ENCODE measurements at regions of chr16 and their contacts with region 1.

Region 1: DNA sequence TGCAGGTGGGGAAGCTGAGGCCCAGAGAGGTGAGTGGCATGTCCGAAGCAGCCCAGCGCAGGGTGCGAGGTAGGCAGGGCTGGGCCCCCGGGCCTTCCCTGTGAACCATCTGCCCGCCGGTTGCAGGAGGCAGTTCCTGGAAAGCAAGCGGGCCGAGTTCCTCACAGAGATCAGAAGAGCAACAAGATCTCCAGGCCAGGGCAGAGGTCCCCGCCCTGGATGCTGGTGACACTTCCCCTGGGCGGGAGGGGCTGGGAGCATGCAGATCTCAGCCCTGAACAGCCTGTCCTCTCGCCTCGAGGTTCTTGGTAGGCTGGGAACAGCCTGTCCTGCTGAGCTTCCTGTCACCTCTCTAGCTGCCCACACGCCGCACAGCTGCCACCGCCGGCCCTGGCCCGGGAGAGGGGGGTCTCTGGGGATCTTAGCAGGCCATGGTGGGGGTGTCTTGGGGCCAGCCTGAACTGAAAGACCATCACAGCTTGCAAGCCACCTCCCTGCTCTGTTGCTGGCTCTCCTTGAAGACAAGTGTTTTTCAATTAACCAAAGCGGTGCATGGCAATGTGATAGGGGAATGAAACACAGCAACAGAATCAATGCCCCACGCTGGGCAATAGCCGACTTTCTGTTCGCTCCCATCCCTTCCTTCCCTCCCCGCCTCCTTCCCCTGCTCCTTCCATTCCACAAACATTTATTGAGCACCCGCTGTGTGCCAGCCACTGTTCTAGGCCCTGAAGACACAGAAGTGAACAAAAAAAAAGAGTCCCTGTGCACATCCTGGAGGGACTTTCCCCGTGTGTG is 31.7 kb downstream of the SOCS1 start:
- DNase-seq: peak; percentile 92
- H3K4me3 Mint-ChIP-seq: peak overlapping the region; percentile 86
- H3K27ac Mint-ChIP-seq: peak overlapping the region; percentile 100
- H3K4me1 Mint-ChIP-seq: peaks cover 56% of the 10 kb centered on the region
- H3K27me3 Mint-ChIP-seq: no peaks in the 10 kb centered on the region

Region 2: GRCh38 chr16:10988164-10988803 is 236.0 kb before region 1 on chr16:
- intact Hi-C with region 1: loop called (anchors 1 kb)
- DNase-seq: peak; percentile 89
- H3K4me3 Mint-ChIP-seq: peak overlapping the region; percentile 66
- H3K27ac Mint-ChIP-seq: peak overlapping the region; percentile 92
- H3K4me1 Mint-ChIP-seq: peaks cover 79% of the 10 kb centered on the region
- H3K27me3 Mint-ChIP-seq: no peaks in the 10 kb centered on the region

Region 3: DNA sequence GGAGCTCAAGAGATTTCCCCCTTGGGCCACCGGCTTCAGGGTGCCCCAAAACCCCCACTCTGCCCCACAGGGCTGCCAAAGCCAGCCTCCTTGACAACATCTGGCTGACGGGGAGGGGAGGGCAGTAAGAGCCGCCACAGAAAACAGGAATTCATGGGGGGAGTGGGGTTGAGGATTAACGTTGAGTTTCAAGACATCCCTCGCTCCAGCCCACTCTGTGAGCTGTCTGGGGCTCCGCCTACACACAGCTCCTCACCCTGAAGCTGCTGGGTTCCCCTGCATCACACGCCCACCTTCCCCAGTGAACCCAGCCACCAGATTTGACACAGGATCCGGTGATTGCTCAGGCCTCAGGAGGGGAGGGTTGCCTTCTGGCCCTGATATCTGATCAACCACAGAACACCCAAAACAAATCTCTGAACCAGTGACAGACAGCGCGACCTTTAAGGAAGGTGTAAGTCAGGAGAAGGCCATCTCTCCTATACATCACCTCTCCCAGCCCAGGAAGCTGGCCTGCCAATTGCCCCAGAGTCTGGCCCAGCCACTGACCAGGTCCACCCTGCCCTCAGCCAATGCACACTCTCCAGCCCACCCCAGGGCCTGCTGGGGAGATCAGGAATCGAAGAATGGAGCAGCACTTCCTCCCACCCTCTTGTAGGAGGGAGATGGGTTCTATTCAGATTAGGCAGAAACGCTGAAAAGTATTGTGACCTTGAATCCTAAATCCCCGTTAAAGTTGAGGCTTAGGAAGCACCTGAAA is 147.9 kb before region 1 on chr16:
- intact Hi-C with region 1: loop called (anchors 1 kb)
- DNase-seq: peak; percentile 84
- H3K4me3 Mint-ChIP-seq: peak overlapping the region; percentile 55
- H3K27ac Mint-ChIP-seq: peak overlapping the region; percentile 90
- H3K4me1 Mint-ChIP-seq: peaks cover 88% of the 10 kb centered on the region
- H3K27me3 Mint-ChIP-seq: no peaks in the 10 kb centered on the region

Region 4: DNA sequence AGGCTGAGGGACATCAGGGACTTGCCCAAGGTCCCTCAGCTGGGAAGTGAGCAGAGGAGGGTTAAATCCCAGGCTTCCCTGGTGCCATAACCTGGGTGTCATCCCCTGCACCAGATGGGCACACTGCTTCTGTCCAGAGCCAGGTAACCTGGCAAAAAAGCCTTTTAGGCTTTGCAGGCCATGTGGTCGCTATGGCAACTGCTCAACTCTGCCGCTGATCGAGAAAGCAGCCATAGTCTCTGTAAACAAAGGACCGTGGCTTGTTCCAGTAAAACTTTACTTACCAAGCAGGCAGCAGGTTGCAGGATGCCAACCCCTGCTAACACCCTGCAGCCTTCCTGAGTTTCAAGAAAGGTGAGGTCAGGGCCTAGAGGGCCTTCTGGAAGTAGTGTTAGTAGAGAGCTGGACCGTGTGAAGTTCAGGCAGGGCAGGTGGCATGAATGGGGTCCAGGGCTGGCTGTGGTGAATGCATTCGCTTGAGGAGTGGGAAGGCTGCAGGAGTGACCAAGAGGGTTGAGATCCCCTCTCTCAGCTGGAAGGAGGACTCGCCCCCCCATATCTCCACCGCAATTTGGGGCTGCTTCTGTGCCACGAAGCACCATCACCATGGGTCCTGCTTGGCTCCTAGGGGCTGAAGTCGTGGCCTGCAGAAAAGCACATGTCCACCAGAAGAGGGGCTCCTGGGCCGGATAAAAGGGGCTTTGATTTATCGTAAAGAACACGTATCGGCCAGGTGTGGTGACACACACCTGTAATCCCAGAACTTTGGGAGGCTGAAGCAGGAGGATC is 59.6 kb before region 1 on chr16:
- intact Hi-C with region 1: loop called (anchors 5 kb)
- DNase-seq: no peak
- H3K4me3 Mint-ChIP-seq: no peak overlapping the region
- H3K27ac Mint-ChIP-seq: peak overlapping the region; percentile 58
- H3K4me1 Mint-ChIP-seq: peaks cover 45% of the 10 kb centered on the region
- H3K27me3 Mint-ChIP-seq: no peaks in the 10 kb centered on the region

Region 5: GRCh38 chr16:11190588-11191560 is 33.4 kb before region 1 on chr16:
- intact Hi-C with region 1: loop called (anchors 5 kb)
- DNase-seq: no peak
- H3K4me3 Mint-ChIP-seq: peak overlapping the region; percentile 22
- H3K27ac Mint-ChIP-seq: peak overlapping the region; percentile 36
- H3K4me1 Mint-ChIP-seq: peaks cover 46% of the 10 kb centered on the region
- H3K27me3 Mint-ChIP-seq: no peaks in the 10 kb centered on the region